Activated CD4-positive, alpha-beta memory T cell treated with anti-CD3 and anti-CD28 coated beads, Interleukin-2, amount 10 ng/mL, durations not matched to agents 7 days and 5 days (primary cell): ENCODE measurements at regions of chrX and their contacts with region 1.

Region 1: DNA sequence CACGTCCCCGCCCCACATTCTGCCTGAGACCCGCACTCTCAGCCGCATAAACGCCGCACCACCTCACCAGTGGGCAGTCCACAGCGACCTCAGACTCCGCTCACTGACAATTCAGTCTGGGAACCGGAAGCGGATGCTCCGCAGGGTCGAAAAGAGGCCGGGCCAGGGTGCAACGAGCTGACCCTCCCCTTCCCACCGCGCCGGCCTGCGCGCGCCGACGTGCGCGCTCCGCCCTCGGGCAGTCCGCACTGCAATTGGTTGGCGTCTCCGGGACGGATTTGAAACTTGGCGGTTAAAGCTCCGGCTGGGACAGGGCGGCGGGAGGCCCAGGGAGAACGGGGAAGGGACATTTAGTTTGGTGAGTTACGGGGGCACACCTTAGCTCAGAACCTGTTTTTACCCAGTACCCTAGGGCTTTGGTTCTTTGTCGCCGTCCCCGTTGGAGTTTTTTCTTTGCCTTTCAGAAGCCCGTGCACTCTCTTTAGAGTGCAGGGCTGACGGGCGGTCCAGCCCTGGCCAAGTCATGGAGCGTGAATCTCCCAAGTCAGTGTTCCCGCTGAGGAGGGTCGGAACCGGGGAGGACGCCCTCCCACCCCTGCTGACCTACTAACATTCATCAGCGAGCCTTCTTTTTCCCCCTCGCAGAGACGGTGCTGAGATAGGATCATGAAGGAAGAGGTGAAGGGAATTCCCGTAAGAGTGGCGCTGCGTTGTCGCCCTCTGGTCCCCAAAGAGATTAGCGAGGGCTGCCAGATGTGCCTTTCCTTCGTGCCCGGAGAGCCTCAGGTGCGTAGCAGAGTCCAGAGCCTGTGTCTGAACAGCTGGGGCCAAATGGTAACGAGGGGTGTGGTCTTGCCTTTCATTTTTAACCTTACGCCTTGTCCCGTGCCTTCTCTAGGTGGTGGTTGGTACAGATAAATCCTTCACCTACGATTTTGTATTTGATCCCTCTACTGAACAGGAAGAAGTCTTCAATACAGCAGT is at the starts of genes KIF4A and PDZD11:
- DNase-seq: peak; percentile 88
- H3K4me3 Mint-ChIP-seq: peak within 1 kb of the TSS; percentile 89
- H3K27ac Mint-ChIP-seq: peak within 1 kb of the TSS; percentile 85
- H3K4me1 Mint-ChIP-seq: peaks cover 33% of the 10 kb centered on the region
- H3K27me3 Mint-ChIP-seq: no peaks in the 10 kb centered on the region
- total RNA-seq, gene KIF4A: 33.3 to 34.0 TPM
- total RNA-seq, gene PDZD11: 36.3 to 38.8 TPM

Region 2: DNA sequence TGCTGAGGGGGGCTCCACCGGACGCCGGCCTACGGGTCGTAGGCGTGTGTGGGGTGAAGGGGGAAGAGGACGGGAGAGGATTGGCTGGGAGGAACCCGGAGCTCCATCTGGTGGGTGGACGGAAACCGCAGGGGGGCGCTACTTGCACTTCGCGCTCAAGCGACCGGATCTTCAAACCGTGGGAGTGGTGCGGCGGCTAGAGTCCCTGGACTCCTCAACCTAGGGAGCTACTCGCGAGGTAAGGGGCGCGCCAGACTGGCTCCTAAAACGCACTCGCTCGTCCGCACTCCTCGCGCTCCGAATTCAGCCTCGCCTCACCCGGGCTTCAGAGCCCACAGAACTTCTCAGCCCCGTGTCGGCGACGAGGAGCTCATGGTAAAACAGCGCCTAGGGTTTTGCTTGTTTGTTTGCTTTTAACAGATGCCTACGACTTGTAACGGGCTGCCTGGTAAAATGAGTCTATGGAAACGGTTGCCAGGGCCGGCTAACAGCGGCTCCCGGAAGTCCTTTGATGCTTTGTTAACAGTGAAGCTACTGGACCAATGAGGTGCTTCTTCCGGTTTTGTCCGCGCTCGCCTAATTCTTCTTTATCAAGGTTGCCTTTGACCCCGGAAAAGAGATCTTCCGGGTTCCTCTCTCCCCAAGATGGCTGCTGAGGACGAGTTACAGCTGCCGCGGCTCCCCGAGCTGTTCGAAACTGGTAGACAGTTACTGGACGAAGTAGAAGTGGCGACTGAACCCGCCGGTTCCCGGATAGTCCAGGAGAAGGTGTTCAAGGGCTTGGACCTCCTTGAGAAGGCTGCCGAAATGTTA is 156.6 kb before region 1 on chrX and contains the start of gene IGBP1:
- CTCF ChIA-PET with region 1: interaction called, 10 read pairs
- POLR2A ChIA-PET with region 1: interaction called, 10 read pairs
- DNase-seq: peak; percentile 83
- H3K4me3 Mint-ChIP-seq: peak within 1 kb of the TSS; percentile 99
- H3K27ac Mint-ChIP-seq: peak within 1 kb of the TSS; percentile 88
- H3K4me1 Mint-ChIP-seq: peaks cover 32% of the 10 kb centered on the region
- H3K27me3 Mint-ChIP-seq: no peaks in the 10 kb centered on the region
- total RNA-seq, gene IGBP1: 63.2 to 65.6 TPM

Region 3: GRCh38 chrX:70313503-70313902 is 23.4 kb after region 1 on chrX:
- CTCF ChIA-PET with region 1: no interaction called
- POLR2A ChIA-PET with region 1: no interaction called
- DNase-seq: no peak
- H3K4me3 Mint-ChIP-seq: no peak overlapping the region
- H3K27ac Mint-ChIP-seq: no peak overlapping the region
- H3K4me1 Mint-ChIP-seq: no peaks in the 10 kb centered on the region
- H3K27me3 Mint-ChIP-seq: no peaks in the 10 kb centered on the region